PC-3 (cell line): ENCODE measurements at regions of chr3 and their contacts with region 1.

Region 1: DNA sequence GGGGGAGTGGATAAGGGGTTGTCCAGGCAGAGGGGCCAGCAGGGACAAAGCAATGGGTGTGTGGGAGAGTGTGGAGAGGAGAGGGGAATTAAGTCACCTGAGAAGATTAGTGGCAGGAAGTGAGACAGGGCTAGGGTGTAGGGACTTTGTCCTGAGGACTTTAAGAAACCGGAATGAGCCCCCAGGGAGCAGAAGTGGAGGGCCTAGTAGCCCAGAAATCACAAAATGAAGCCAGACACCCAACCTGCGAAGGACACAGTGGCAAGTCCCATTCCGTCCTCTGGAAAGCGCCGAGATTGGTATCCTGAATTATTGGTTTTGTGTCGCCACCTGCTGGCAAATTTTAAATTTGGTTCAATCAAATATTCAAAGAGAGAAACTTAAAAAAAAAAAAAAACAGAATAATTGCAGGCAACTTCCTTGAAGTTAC is 78.0 kb upstream of the SLC25A36 start:
- DNase-seq: peak; percentile 68
- ATAC-seq: peak; percentile 31; the same call in 1 of the 2 replicates
- H3K4me3 ChIP-seq: no peak overlapping the region
- H3K27ac ChIP-seq: no peak overlapping the region
- H3K4me1 ChIP-seq: no peaks in the 10 kb centered on the region
- H3K27me3 ChIP-seq: no peaks in the 10 kb centered on the region
- CTCF ChIP-seq: peak; percentile 57

Region 2: GRCh38 chr3:139427283-139427993 is 1436.2 kb before region 1 on chr3:
- CTCF ChIA-PET with region 1: no interaction called
- POLR2A ChIA-PET with region 1: no interaction called
- intact Hi-C with region 1: loop called (anchors 10 kb)
- DNase-seq: peak; percentile 80
- ATAC-seq: peak; percentile 62
- H3K4me3 ChIP-seq: no peak overlapping the region
- H3K27ac ChIP-seq: no peak overlapping the region
- H3K4me1 ChIP-seq: no peaks in the 10 kb centered on the region
- H3K27me3 ChIP-seq: no peaks in the 10 kb centered on the region
- CTCF ChIP-seq: peak; percentile 82

Region 3: DNA sequence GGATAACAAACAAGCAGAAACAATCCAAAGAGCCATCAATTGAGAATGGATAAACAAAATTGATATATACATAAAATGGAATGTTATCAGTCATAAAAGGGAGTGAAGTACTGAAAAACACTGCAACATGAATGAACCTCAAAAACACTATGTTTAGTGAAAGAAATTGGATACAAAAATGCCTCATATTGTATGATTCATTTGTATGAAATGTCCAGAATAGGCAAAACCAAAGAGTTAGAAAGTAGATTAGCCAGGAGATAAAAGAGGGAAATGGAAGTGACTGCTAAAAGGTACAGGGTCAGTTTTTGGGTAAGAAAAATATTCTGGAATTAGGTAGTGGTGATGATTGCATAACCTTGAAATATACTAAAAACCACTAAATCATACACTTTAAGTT is 68.2 kb after region 1 on chr3:
- CTCF ChIA-PET with region 1: no interaction called
- POLR2A ChIA-PET with region 1: no interaction called
- intact Hi-C with region 1: no loop called
- DNase-seq: no peak
- ATAC-seq: no peak
- H3K4me3 ChIP-seq: no peak overlapping the region
- H3K27ac ChIP-seq: no peak overlapping the region
- H3K4me1 ChIP-seq: no peaks in the 10 kb centered on the region
- H3K27me3 ChIP-seq: no peaks in the 10 kb centered on the region
- CTCF ChIP-seq: no peak

Region 4: DNA sequence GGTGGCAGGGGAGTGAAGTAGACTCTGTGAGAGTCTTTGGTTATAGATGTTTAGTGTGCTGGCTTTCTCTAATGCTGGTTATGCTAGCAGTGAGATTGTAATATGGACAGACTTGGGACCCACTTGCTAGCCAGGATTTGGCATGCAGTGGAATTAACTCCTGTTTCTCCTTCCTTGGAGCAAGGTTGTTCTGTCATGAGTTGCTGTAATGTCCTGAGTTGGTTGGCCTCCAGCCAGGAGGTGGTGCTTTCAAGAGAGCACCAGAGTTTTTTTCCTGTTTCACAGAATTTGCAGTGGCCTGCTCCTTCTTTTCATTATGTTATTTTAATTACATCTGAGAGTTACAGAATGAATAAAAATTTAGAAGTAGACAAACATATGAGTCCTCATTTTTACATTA is 279.9 kb after region 1 on chr3:
- CTCF ChIA-PET with region 1: no interaction called
- POLR2A ChIA-PET with region 1: no interaction called
- intact Hi-C with region 1: no loop called
- DNase-seq: no peak
- ATAC-seq: no peak
- H3K4me3 ChIP-seq: no peak overlapping the region
- H3K27ac ChIP-seq: no peak overlapping the region
- H3K4me1 ChIP-seq: peaks cover 5% of the 10 kb centered on the region; the same call in 1 of the 2 replicates
- H3K27me3 ChIP-seq: no peaks in the 10 kb centered on the region
- CTCF ChIP-seq: no peak